ENCODE measurements at regions of chr11 and their contacts with region 1.

Region 1: DNA sequence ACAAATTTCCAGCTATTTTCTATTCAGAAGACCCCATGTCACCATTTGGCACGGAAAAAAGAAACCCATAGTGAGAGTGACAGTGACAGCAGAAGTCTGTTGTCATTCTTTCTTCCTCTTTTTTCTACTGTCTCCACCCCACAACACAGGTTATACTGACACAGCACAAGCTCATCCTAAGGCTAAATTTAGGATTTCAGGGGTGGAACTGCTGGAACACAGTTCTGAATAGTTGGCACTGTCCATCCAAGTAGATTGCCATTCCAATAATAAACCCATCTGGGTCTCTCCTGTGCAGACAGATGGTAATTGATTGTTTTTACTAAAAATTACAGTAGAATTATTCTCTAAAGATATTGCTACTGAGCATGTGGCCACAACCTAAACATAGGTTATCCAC is 95.2 kb upstream of the C11orf87 start:
- DNase-seq: no peak
- ATAC-seq: peak; percentile 70

Region 2: DNA sequence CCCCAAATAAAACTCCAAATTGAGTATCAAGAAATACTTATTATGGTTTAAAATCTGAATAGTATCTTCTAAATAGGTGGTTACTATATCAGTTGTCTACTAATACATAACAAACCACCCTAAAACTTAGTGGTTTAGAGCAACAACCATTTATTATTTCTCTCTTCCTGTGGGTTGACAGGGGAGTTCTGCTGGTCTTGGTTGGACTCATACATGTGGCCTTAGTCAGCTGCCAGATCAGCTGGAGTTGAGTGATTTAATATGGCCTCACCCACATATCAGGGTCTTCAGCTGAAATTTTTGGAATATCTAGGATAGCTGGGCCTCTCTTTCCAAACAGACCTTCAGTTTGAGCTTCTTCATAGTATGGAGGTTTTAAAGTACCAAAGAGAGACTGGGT is 894.0 kb before region 1 on chr11:
- intact Hi-C with region 1: loop called (anchors 5 kb)
- DNase-seq: no peak
- ATAC-seq: no peak

Measured in left ventricle myocardium superior (tissue), 1 donor.